GM12878 (cell line): ENCODE measurements at regions of chr12 and their contacts with region 1.

Region 1: GRCh38 chr12:116539905-116540482 is 19.2 kb upstream of the MAP1LC3B2 start:
- DNase-seq: no peak
- ATAC-seq: no peak
- H3K4me3 ChIP-seq: no peak overlapping the region
- H3K27ac ChIP-seq: no peak overlapping the region
- H3K4me1 ChIP-seq: peaks cover 34% of the 10 kb centered on the region
- H3K27me3 ChIP-seq: no peaks in the 10 kb centered on the region
- CTCF ChIP-seq: no peak
- EP300 ChIP-seq: no peak
- POLR2A ChIP-seq: no peak
- RAD21 ChIP-seq: no peak

Region 2: DNA sequence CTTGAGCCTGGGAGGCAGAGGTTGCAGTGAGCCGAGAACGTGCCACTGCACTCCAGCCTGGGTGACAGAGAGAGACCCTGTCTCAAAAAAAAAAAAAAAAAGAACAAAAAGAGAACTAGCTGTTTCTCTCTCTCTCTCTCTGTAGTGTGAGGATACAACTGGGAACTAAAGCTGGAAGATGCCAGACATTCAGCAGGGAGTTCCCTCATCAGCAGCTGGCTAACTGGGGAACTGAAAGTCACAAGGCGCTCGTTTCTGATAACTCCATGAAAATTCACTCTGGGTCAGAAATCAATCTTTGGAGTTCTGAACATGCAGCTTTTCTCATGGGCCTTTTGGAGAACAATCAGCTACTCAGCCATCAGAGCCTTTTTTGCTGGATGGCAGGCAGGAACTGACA is 24.3 kb before region 1 on chr12:
- CTCF ChIA-PET with region 1: no interaction called
- POLR2A ChIA-PET with region 1: no interaction called
- RAD21 ChIA-PET with region 1: no interaction called
- SMC1A ChIA-PET with region 1: no interaction called
- in situ Hi-C with region 1: no loop called
- intact Hi-C with region 1: no loop called
- DNase-seq: no peak
- ATAC-seq: no peak
- H3K4me3 ChIP-seq: no peak overlapping the region
- H3K27ac ChIP-seq: no peak overlapping the region
- H3K4me1 ChIP-seq: peaks cover 7% of the 10 kb centered on the region; the same call in 1 of the 2 replicates
- H3K27me3 ChIP-seq: peaks cover 0 to 2% of the 10 kb centered on the region in 2 experiments; a peak in 1 of 4 replicates
- CTCF ChIP-seq: no peak
- EP300 ChIP-seq: no peak
- POLR2A ChIP-seq: no peak
- RAD21 ChIP-seq: no peak

Region 3: DNA sequence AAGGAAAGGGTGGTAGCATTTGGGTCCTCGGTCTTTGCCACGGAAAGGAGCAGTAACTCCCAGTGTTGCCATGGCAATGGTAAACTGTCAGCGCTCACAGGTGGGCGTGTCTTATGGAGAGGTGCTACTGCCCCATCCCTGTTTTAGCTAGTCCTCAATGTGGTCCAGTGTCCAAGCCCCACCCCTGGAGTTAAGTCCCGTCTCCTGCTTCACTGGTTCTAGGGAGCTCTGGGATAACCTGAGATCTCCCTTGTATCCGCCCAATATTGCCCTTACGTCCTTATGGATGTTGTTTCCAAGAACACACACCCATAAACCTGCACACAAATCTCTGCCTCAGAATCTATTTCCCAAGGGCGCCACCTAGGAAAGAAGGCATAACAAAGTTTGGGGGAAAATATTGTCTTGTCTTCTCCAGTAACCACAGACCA is 133.7 kb after region 1 on chr12:
- CTCF ChIA-PET with region 1: no interaction called
- POLR2A ChIA-PET with region 1: no interaction called
- RAD21 ChIA-PET with region 1: interaction called, 3 read pairs
- SMC1A ChIA-PET with region 1: no interaction called
- in situ Hi-C with region 1: no loop called
- intact Hi-C with region 1: loop called (anchors 2 kb)
- DNase-seq: no peak
- ATAC-seq: no peak
- H3K4me3 ChIP-seq: no peak overlapping the region
- H3K27ac ChIP-seq: peak overlapping the region; percentile 51
- H3K4me1 ChIP-seq: peaks cover 23% of the 10 kb centered on the region
- H3K27me3 ChIP-seq: no peaks in the 10 kb centered on the region
- CTCF ChIP-seq: peak in 1 of 3 experiments; percentile 18; a peak in 1 of 6 replicates
- EP300 ChIP-seq: no peak
- POLR2A ChIP-seq: no peak
- RAD21 ChIP-seq: 0 out of 2 replicates have a peak, but pooled peaks have one; percentile 7